ENCODE measurements at regions of chr14 and their contacts with region 1.

Region 1: GRCh38 chr14:88005978-88006851 is 1.3 kb downstream of the GPR65 start:
- DNase-seq: peak; percentile 83
- ATAC-seq: peak; percentile 89
- H3K4me3 Mint-ChIP-seq: peak overlapping the region; percentile 82
- H3K27ac Mint-ChIP-seq: peak overlapping the region; percentile 92
- H3K4me1 Mint-ChIP-seq: peaks cover 63% of the 10 kb centered on the region
- H3K27me3 Mint-ChIP-seq: no peaks in the 10 kb centered on the region

Region 2: GRCh38 chr14:87690076-87690613 is 316.1 kb before region 1 on chr14:
- CTCF ChIA-PET with region 1: no interaction called
- POLR2A ChIA-PET with region 1: no interaction called
- intact Hi-C with region 1: no loop called
- DNase-seq: no peak
- ATAC-seq: no peak
- H3K4me3 Mint-ChIP-seq: no peak overlapping the region
- H3K27ac Mint-ChIP-seq: no peak overlapping the region
- H3K4me1 Mint-ChIP-seq: no peaks in the 10 kb centered on the region
- H3K27me3 Mint-ChIP-seq: peaks cover 8% of the 10 kb centered on the region

Region 3: GRCh38 chr14:87952307-87953094 is 53.7 kb before region 1 on chr14:
- CTCF ChIA-PET with region 1: no interaction called
- POLR2A ChIA-PET with region 1: no interaction called
- intact Hi-C with region 1: loop called in 1 of 2 experiments (anchors 5 kb)
- DNase-seq: no peak
- ATAC-seq: no peak
- H3K4me3 Mint-ChIP-seq: no peak overlapping the region
- H3K27ac Mint-ChIP-seq: peak overlapping the region; percentile 67
- H3K4me1 Mint-ChIP-seq: peaks cover 20% of the 10 kb centered on the region
- H3K27me3 Mint-ChIP-seq: no peaks in the 10 kb centered on the region

Region 4: GRCh38 chr14:88030079-88030478 is 23.9 kb after region 1 on chr14:
- CTCF ChIA-PET with region 1: interaction called, 4 read pairs
- POLR2A ChIA-PET with region 1: no interaction called
- intact Hi-C with region 1: loop called in 1 of 2 experiments (anchors 1 kb)
- DNase-seq: no peak
- ATAC-seq: no peak
- H3K4me3 Mint-ChIP-seq: no peak overlapping the region
- H3K27ac Mint-ChIP-seq: peak overlapping the region; percentile 32
- H3K4me1 Mint-ChIP-seq: peaks cover 50% of the 10 kb centered on the region
- H3K27me3 Mint-ChIP-seq: no peaks in the 10 kb centered on the region

Region 5: GRCh38 chr14:88168498-88169165 is 162.4 kb after region 1 on chr14:
- CTCF ChIA-PET with region 1: interaction called, 5 read pairs
- POLR2A ChIA-PET with region 1: no interaction called
- intact Hi-C with region 1: loop called in 1 of 2 experiments (anchors 5 kb)
- DNase-seq: peak; percentile 69
- ATAC-seq: peak; percentile 91
- H3K4me3 Mint-ChIP-seq: no peak overlapping the region
- H3K27ac Mint-ChIP-seq: no peak overlapping the region
- H3K4me1 Mint-ChIP-seq: no peaks in the 10 kb centered on the region
- H3K27me3 Mint-ChIP-seq: peaks cover 7% of the 10 kb centered on the region

Region 6: DNA sequence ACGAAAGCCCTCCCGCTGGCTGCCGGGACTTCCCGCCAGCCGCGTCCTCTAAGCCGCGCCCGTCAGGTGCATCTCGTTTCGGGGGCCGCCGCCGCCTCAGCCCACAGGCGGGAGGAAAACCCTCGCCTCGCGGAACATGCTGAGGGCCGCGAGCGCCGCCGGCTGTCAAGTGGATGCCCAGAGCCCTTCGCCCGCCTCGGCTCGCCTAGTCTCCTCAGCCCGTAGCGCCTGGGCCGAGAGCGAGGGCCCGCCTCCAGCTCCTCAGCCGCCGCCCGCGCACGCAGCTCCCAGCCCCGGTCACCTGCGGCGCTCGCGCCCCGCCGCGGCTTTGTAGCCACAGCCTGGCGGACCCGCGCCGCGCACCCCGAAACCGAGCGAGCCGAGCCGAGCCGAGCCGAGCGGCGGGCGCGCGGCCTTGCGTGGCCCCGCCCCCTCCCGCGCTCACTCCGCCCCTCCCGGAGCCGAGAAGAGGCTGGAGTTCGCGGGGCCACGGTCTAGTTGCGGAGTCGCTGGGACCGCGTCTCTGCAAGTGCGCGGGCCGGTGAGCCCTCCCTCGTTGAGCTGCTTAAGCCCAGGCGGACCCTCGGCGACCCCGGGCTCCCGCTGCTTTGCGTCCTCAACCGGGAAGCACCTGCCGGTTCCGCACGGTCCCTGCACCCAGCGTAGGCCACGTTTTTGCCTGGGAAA is 786.5 kb after region 1 on chr14 and contains the start of gene EML5:
- CTCF ChIA-PET with region 1: no interaction called
- POLR2A ChIA-PET with region 1: no interaction called
- intact Hi-C with region 1: loop called in 1 of 2 experiments (anchors 5 kb)
- DNase-seq: peak; percentile 90
- ATAC-seq: peak; percentile 76
- H3K4me3 Mint-ChIP-seq: peak within 1 kb of the TSS; percentile 87
- H3K27ac Mint-ChIP-seq: peak within 1 kb of the TSS; percentile 87
- H3K4me1 Mint-ChIP-seq: peaks cover 26% of the 10 kb centered on the region
- H3K27me3 Mint-ChIP-seq: no peaks in the 10 kb centered on the region
- total RNA-seq, gene EML5: 8.1 TPM

Measured in activated CD4-positive, alpha-beta T cell treated with anti-CD3 and anti-CD28 coated beads for 36 hours (primary cell).